B cell (primary cell): ENCODE measurements at regions of chr3 and their contacts with region 1.

Region 1: DNA sequence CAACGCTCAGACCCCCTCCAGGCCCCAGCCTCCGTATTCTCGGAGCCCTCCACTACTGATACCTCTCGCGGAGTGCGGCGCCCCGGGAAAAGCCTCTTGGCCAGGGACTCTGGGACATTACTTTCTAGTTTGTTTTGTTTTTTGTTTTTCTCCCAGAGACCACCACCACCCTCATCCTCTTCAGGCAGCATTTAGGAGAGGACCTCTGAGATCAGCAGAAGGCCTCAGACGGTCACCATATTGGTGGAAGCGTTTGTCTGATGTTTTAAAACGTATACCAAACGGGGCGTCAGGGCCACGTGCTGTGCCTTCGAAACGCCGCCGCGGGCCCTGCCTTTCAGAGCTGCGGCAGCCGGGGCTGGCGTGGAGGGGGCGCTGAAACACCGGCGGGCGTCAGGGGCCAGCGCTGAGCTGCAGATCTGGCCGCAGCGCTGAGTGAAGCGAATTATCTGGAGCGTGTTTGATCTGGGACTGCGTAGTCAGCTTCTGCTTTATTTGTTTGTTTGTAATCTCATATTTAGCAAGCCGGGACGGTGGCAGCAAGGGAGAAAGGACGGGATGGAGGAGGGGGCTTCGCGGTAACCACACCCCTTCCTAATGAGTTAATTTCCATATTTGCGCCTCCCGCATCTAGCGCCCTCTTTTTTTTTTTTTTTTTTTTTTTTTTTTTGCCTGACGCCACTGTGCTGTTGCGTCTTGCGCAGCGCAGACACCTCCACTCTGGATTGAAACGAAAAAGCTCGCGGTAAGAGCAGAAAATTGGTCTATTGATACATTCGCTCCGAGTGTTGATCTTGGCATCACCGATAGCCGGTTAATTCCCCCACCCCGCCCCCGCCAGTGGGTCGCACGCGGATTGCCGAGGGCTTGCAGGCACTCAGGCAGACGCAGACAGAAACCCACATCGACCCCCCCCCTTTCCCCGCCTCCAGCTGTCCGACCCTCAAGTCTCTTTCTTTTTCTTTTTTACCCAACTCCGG is 14.9 kb downstream of the SOX2 start:
- DNase-seq: peak; percentile 43
- ATAC-seq: no peak
- H3K4me3 ChIP-seq: peak overlapping the region; percentile 25 to 64 (median 48)
- H3K4me3 Mint-ChIP-seq: peak overlapping the region; percentile 89
- H3K27ac ChIP-seq: no peak overlapping the region
- H3K27ac Mint-ChIP-seq: peak overlapping the region; percentile 73
- H3K4me1 ChIP-seq: peaks cover 17 to 18% of the 10 kb centered on the region in 2 donors
- H3K4me1 Mint-ChIP-seq: peaks cover 12% of the 10 kb centered on the region
- H3K27me3 ChIP-seq: peaks cover 0 to 87% (median 78%) of the 10 kb centered on the region in 4 experiments
- H3K27me3 Mint-ChIP-seq: peaks cover 96% of the 10 kb centered on the region
- CTCF ChIP-seq: no peak

Region 2: GRCh38 chr3:181694805-181695660 is 31.6 kb before region 1 on chr3:
- CTCF ChIA-PET with region 1: no interaction called
- POLR2A ChIA-PET with region 1: no interaction called
- intact Hi-C with region 1: loop called (anchors 5 kb)
- DNase-seq: peak; percentile 13
- ATAC-seq: no peak
- H3K4me3 ChIP-seq: peak overlapping the region in 1 of 5 experiments; percentile 7
- H3K4me3 Mint-ChIP-seq: no peak overlapping the region
- H3K27ac ChIP-seq: no peak overlapping the region
- H3K27ac Mint-ChIP-seq: no peak overlapping the region
- H3K4me1 ChIP-seq: peaks cover 4 to 16% of the 10 kb centered on the region in 2 donors
- H3K4me1 Mint-ChIP-seq: peaks cover 16% of the 10 kb centered on the region
- H3K27me3 ChIP-seq: peaks cover 0 to 37% (median 32%) of the 10 kb centered on the region in 4 experiments
- H3K27me3 Mint-ChIP-seq: peaks cover 56% of the 10 kb centered on the region
- CTCF ChIP-seq: no peak

Region 3: DNA sequence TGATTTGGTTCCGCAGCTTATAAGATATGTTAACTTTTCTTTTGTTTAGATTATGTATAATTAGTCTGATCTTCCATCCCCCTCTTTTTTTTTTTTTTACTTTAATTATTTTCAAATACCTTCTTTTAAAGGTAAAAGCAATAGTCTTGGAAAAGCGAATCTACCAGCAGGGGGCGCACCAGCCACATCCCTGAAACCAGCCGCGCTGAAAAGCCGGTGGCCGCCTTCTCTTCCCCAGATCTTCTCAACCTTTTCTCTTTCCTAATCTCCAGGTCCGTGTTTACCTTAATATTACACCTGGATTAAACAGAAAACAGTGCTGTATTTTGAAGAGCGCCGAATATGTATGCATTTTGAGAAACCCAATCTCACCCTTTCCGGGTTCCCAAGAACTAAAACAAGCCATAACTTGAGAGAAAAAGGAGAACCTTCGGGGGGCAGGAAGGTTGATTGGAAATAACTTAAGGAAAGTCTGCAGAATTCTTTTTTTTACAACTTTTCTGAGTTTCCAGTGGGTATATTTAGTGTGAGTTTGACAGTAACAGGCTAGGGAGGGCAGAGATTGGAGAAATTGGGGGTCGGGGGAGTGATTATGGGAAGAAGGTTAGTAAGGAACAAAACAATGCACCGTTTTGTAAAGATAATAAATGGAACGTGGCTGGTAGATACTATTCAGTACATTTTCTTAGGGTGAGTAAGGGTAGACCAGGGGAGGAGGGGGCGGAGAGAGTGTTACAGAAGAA is 16.9 kb before region 1 on chr3:
- CTCF ChIA-PET with region 1: interaction called, 5 read pairs
- POLR2A ChIA-PET with region 1: no interaction called
- intact Hi-C with region 1: loop called (anchors 2 kb)
- DNase-seq: peak; percentile 74
- ATAC-seq: no peak
- H3K4me3 ChIP-seq: no peak overlapping the region
- H3K4me3 Mint-ChIP-seq: peak overlapping the region; percentile 68
- H3K27ac ChIP-seq: no peak overlapping the region
- H3K27ac Mint-ChIP-seq: peak overlapping the region; percentile 50
- H3K4me1 ChIP-seq: peaks cover 27 to 41% of the 10 kb centered on the region in 2 donors
- H3K4me1 Mint-ChIP-seq: peaks cover 12% of the 10 kb centered on the region
- H3K27me3 ChIP-seq: peaks cover 0 to 76% (median 52%) of the 10 kb centered on the region in 4 experiments
- H3K27me3 Mint-ChIP-seq: peaks cover 48% of the 10 kb centered on the region
- CTCF ChIP-seq: peak; percentile 91